CD4-positive, alpha-beta T cell (primary cell): ENCODE measurements at regions of chr1 and their contacts with region 1.

Region 1: GRCh38 chr1:49098866-49099265 is 322.2 kb upstream of the BEND5 start:
- DNase-seq: no peak
- ATAC-seq: no peak
- H3K4me3 ChIP-seq: no peak overlapping the region
- H3K4me3 Mint-ChIP-seq: no peak overlapping the region
- H3K27ac ChIP-seq: no peak overlapping the region
- H3K27ac Mint-ChIP-seq: no peak overlapping the region
- H3K4me1 ChIP-seq: no peaks in the 10 kb centered on the region
- H3K4me1 Mint-ChIP-seq: no peaks in the 10 kb centered on the region
- H3K27me3 ChIP-seq: no peaks in the 10 kb centered on the region
- H3K27me3 Mint-ChIP-seq: no peaks in the 10 kb centered on the region
- CTCF ChIP-seq: no peak

Region 2: DNA sequence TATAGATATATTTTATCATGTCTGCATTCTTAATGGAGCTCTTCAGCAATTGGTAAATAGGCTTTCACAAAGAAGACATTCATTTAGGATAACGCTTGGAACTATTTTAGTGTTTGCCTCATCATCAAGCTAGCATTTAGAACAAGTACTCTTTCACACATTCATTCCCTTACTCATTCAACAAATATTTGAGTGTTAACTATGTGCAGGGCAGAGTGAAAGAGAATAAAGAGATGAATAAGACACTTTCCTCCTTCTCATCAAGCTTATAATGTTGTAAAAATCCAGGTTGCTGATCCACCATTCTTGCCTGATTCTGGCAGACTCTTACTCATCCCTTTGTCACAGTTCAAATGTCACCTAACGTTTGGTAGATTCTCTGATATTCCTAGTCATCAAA is 64.2 kb after region 1 on chr1:
- CTCF ChIA-PET with region 1: no interaction called
- POLR2A ChIA-PET with region 1: no interaction called
- intact Hi-C with region 1: loop called in 1 of 2 experiments (anchors 2 kb)
- DNase-seq: no peak
- ATAC-seq: no peak
- H3K4me3 ChIP-seq: no peak overlapping the region
- H3K4me3 Mint-ChIP-seq: no peak overlapping the region
- H3K27ac ChIP-seq: no peak overlapping the region
- H3K27ac Mint-ChIP-seq: no peak overlapping the region
- H3K4me1 ChIP-seq: no peaks in the 10 kb centered on the region
- H3K4me1 Mint-ChIP-seq: no peaks in the 10 kb centered on the region
- H3K27me3 ChIP-seq: no peaks in the 10 kb centered on the region
- H3K27me3 Mint-ChIP-seq: no peaks in the 10 kb centered on the region
- CTCF ChIP-seq: no peak